ENCODE measurements at regions of chr12 and their contacts with region 1.

Region 1: DNA sequence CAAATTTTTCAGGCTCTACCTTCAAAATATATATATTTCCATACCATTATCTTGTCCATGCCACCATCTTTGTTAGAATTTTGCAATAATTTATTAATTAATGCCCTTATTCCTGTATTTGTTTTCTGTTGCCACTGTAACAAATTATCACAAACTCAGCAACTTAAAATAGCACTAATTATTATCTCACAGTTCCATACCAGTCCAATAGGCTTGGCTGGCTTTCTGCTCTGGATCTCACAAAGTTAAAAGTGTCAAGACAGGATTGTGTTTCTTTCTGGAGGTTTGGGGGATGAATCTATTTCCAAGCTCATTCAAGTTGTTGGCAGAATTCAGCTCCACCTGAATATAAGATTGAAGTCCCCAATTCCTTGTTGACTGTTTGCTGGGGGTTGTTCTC is 58.6 kb upstream of the SLC38A4 start:
- DNase-seq: no peak
- H3K4me3 ChIP-seq: no peak overlapping the region
- H3K27ac ChIP-seq: no peak overlapping the region
- H3K4me1 ChIP-seq: no peaks in the 10 kb centered on the region
- H3K27me3 ChIP-seq: peaks cover 11 to 23% of the 10 kb centered on the region in 2 experiments
- CTCF ChIP-seq: no peak
- POLR2A ChIP-seq: no peak

Region 2: GRCh38 chr12:46858368-46858767 is 26.0 kb before region 1 on chr12:
- CTCF ChIA-PET with region 1: no interaction called
- POLR2A ChIA-PET with region 1: no interaction called
- dilution Hi-C with region 1: no loop called
- intact Hi-C with region 1: loop called (anchors 1 kb)
- DNase-seq: no peak
- H3K4me3 ChIP-seq: no peak overlapping the region
- H3K27ac ChIP-seq: no peak overlapping the region
- H3K4me1 ChIP-seq: no peaks in the 10 kb centered on the region
- H3K27me3 ChIP-seq: no peaks in the 10 kb centered on the region
- CTCF ChIP-seq: no peak
- POLR2A ChIP-seq: no peak

Measured in endothelial cell of umbilical vein (primary cell).